ENCODE measurements at regions of chr3 and their contacts with region 1.

Region 1: GRCh38 chr3:98188545-98188944 is 22.0 kb downstream of the OR5H15 start:
- DNase-seq: peak; percentile 12
- H3K4me3 ChIP-seq: no peak overlapping the region
- H3K27ac ChIP-seq: no peak overlapping the region
- H3K4me1 ChIP-seq: no peaks in the 10 kb centered on the region
- CTCF ChIP-seq: peak; percentile 58

Region 2: DNA sequence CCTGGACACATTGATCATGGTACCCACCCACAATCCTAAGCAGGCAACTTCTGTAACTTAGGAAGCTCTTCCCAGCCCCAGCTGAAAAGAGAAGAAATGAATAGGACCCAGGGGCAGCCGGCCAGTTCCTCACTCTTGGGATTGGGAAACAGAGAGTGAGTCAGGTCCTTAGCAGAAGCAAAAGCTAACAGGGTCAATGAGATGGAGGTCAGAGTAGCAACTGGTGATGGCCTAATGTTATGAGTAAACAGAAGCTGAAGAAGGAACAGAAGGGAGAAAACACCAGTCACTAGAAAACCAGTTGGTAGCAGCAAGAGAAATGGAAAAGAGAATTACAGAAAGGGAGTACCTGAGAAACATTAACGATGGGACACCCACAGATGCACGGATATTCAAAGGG is 236.3 kb before region 1 on chr3:
- CTCF ChIA-PET with region 1: no interaction called
- POLR2A ChIA-PET with region 1: no interaction called
- intact Hi-C with region 1: no loop called
- DNase-seq: no peak
- H3K4me3 ChIP-seq: no peak overlapping the region
- H3K27ac ChIP-seq: no peak overlapping the region
- H3K4me1 ChIP-seq: no peaks in the 10 kb centered on the region
- CTCF ChIP-seq: no peak

Region 3: GRCh38 chr3:98140531-98140930 is 48.0 kb before region 1 on chr3:
- CTCF ChIA-PET with region 1: no interaction called
- POLR2A ChIA-PET with region 1: no interaction called
- intact Hi-C with region 1: loop called (anchors 1 kb)
- DNase-seq: no peak
- H3K4me3 ChIP-seq: no peak overlapping the region
- H3K27ac ChIP-seq: no peak overlapping the region
- H3K4me1 ChIP-seq: no peaks in the 10 kb centered on the region
- CTCF ChIP-seq: no peak

Measured in OCI-LY7 (cell line).